ENCODE measurements at regions of chr15 and their contacts with region 1.

Region 1: GRCh38 chr15:71008250-71008870 is 106.9 kb upstream of the THSD4 start:
- DNase-seq: no peak
- H3K4me3 ChIP-seq: no peak overlapping the region
- H3K27ac ChIP-seq: no peak overlapping the region
- H3K4me1 ChIP-seq: no peaks in the 10 kb centered on the region
- H3K27me3 ChIP-seq: no peaks in the 10 kb centered on the region
- CTCF ChIP-seq: no peak
- EP300 ChIP-seq: no peak
- POLR2A ChIP-seq: no peak

Region 2: GRCh38 chr15:70955151-70955550 is 53.2 kb before region 1 on chr15:
- intact Hi-C with region 1: no loop called
- DNase-seq: no peak
- H3K4me3 ChIP-seq: no peak overlapping the region
- H3K27ac ChIP-seq: no peak overlapping the region
- H3K4me1 ChIP-seq: no peaks in the 10 kb centered on the region
- H3K27me3 ChIP-seq: no peaks in the 10 kb centered on the region
- CTCF ChIP-seq: no peak
- EP300 ChIP-seq: no peak
- POLR2A ChIP-seq: no peak

Region 3: DNA sequence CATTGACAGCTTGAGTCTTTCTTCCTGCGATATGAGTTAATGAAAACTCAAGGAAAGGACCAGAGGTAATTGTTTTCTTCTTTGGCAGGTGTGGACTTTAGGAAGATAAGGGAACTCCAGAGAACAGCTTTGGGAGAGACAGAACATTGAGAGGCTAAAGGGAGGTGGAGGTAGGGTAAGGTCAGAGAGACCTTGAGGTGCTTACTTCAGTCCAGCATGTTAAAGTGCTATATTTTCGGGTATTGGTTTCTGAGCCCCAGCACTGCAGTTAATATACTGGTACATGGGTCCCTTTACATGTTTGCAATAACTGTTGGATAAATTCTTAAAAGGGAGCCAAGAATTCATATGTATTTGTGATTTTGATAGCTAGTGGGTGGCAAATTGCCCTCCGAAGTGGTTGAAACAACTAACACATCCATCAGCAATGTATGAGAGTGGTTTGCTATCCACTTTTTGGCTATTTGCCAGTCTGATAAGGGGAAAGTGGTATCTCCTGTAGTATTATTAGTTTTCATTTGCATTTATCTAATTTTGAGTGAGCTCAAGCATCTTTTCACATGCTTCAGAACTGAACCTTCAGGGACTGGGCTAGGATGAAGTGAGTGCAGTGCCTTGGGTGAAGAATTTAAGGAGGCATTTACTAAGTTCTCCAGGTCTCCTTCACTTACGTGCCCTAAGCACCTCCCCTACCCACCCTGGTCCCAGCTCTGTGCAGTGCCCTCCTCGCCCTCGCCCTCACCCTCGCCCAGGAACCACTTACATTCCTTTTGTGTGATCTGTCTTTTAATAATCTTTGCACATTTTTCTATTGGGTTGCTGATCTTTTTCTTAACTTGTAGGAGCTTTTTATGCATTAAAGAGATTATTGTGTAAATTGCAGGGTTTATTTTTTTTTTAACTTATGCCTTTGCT is 429.3 kb after region 1 on chr15:
- intact Hi-C with region 1: loop called in 1 of 4 experiments (anchors 5 kb)
- DNase-seq: no peak
- H3K4me3 ChIP-seq: no peak overlapping the region
- H3K27ac ChIP-seq: no peak overlapping the region
- H3K4me1 ChIP-seq: no peaks in the 10 kb centered on the region
- H3K27me3 ChIP-seq: no peaks in the 10 kb centered on the region
- CTCF ChIP-seq: no peak
- EP300 ChIP-seq: no peak
- POLR2A ChIP-seq: no peak